H1 (cell line): ENCODE measurements at regions of chr6 and their contacts with region 1.

Region 1: DNA sequence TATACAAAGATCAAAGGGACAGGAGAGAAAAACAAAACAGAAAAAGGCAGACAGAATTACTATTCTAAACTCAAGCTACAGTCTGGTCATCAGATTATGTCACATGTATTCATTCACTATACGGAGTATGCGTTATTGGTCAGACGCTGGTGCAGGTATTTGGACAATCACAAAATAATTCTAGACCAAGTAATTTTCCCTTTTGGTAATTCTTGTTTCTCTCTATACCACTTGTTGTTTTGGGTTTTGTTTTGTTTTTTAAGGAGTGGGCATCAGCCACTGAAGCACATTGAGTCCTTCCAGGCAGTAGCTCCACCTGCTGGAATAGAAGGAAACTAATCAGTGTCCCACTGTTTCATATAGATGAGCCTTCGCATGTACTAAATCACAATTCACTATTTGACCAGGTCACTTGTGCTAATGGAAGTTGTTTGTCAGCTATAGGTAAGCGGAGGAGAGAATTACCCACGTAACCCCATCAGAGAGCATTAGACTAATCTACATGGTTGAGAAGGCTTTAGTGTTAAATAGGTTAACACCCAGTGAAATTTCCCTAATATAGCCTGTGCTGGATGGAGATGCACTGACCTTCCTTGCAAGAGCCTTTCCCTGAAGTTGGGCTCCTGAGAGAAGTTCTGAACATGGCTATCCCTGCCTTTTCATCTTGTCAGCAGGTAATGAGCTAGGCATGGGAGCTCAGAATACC is 77.9 kb downstream of the TNFAIP3 start:
- DNase-seq: no peak
- H3K4me3 ChIP-seq: no peak overlapping the region
- H3K27ac ChIP-seq: no peak overlapping the region
- H3K4me1 ChIP-seq: no peaks in the 10 kb centered on the region
- H3K27me3 ChIP-seq: no peaks in the 10 kb centered on the region
- CTCF ChIP-seq: peak in 2 of 3 experiments; percentile 65 to 76; a peak in 3 of 4 replicates
- EP300 ChIP-seq: no peak
- POLR2A ChIP-seq: no peak
- RAD21 ChIP-seq: peak; percentile 72 to 78

Region 2: GRCh38 chr6:137734875-137735182 is 210.1 kb before region 1 on chr6:
- CTCF ChIA-PET with region 1: no interaction called
- POLR2A ChIA-PET with region 1: no interaction called
- DNase-seq: no peak
- H3K4me3 ChIP-seq: no peak overlapping the region
- H3K27ac ChIP-seq: no peak overlapping the region
- H3K4me1 ChIP-seq: no peaks in the 10 kb centered on the region
- H3K27me3 ChIP-seq: no peaks in the 10 kb centered on the region
- CTCF ChIP-seq: no peak
- EP300 ChIP-seq: no peak
- POLR2A ChIP-seq: no peak
- RAD21 ChIP-seq: no peak

Region 3: DNA sequence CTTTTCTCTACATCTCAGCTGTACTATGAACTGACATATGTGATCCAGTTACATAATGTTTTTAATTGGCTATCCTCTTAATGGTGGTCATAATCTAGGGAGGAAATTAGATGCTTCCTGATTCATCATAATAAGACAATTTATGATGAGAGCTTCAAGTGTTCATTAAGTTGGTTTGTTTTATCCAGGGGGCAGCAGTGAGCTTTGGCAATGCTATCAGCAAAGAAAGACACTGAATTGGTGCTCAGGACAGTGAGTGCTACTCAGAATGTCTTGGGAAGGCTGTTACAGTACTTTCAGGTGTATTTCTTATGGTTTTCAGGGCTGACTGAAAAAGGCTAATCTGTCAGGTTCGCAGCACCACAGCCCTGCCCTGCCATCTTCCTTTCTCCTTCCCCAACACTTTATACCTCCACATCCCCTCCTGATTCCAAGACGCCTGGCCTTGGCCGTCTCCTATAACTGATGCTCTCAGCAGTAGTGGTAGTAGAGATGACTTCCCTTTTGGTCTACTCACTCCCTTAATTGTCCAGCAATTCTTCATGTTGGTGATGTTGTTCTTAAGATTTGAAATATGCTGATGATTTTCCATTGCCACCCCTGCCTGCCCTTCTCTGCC is 144.9 kb before region 1 on chr6:
- CTCF ChIA-PET with region 1: interaction called, 36 read pairs
- POLR2A ChIA-PET with region 1: no interaction called
- DNase-seq: no peak
- H3K4me3 ChIP-seq: no peak overlapping the region
- H3K27ac ChIP-seq: no peak overlapping the region
- H3K4me1 ChIP-seq: no peaks in the 10 kb centered on the region; a peak in 1 of 7 replicates
- H3K27me3 ChIP-seq: no peaks in the 10 kb centered on the region
- CTCF ChIP-seq: peak in 2 of 3 experiments; percentile 60 to 65; a peak in 3 of 4 replicates
- EP300 ChIP-seq: no peak
- POLR2A ChIP-seq: no peak
- RAD21 ChIP-seq: peak; percentile 66 to 73

Region 4: DNA sequence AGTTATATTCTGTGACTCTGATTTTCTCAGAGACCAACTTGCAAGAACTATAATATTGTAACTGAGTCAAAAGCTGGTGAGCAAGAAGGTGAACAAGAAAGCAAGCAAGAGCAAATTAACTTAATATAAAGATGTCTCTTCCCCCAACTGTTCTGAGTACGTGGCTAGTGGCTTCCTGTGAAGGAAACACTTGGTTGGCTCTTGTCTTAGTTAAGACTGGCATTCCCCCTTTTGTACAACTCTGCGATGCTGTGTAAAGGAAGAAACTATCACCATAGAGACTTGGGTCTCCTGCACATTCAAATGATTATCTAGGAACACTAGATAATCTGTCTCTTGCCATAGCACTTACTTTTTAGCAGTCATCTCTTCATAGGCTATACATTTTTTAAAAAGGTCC is 125.2 kb before region 1 on chr6:
- CTCF ChIA-PET with region 1: no interaction called
- POLR2A ChIA-PET with region 1: no interaction called
- DNase-seq: no peak
- H3K4me3 ChIP-seq: no peak overlapping the region
- H3K27ac ChIP-seq: no peak overlapping the region
- H3K4me1 ChIP-seq: no peaks in the 10 kb centered on the region
- H3K27me3 ChIP-seq: no peaks in the 10 kb centered on the region
- CTCF ChIP-seq: no peak
- EP300 ChIP-seq: no peak
- POLR2A ChIP-seq: no peak
- RAD21 ChIP-seq: no peak

Region 5: DNA sequence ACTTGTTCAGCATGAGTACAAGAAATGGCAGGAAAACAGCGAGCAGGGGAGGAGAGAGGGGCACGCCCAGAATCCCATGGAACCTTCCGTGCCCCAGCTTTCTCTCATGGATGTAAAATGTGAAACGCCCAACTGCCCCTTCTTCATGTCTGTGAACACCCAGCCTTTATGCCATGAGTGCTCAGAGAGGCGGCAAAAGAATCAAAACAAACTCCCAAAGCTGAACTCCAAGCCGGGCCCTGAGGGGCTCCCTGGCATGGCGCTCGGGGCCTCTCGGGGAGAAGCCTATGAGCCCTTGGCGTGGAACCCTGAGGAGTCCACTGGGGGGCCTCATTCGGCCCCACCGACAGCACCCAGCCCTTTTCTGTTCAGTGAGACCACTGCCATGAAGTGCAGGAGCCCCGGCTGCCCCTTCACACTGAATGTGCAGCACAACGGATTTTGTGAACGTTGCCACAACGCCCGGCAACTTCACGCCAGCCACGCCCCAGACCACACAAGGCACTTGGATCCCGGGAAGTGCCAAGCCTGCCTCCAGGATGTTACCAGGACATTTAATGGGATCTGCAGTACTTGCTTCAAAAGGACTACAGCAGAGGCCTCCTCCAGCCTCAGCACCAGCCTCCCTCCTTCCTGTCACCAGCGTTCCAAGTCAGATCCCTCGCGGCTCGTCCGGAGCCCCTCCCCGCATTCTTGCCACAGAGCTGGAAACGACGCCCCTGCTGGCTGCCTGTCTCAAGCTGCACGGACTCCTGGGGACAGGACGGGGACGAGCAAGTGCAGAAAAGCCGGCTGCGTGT is 66.3 kb before region 1 on chr6:
- CTCF ChIA-PET with region 1: interaction called, 14 read pairs
- POLR2A ChIA-PET with region 1: no interaction called
- DNase-seq: peak; percentile 25 to 84
- H3K4me3 ChIP-seq: no peak overlapping the region
- H3K27ac ChIP-seq: no peak overlapping the region
- H3K4me1 ChIP-seq: peaks cover 0 to 11% (median 5%) of the 10 kb centered on the region in 4 experiments; a peak in 4 of 7 replicates
- H3K27me3 ChIP-seq: no peaks in the 10 kb centered on the region
- CTCF ChIP-seq: peak; percentile 65 to 78 (median 69)
- EP300 ChIP-seq: no peak
- POLR2A ChIP-seq: no peak
- RAD21 ChIP-seq: peak; percentile 33 to 49; a peak in 3 of 4 replicates

Region 6: DNA sequence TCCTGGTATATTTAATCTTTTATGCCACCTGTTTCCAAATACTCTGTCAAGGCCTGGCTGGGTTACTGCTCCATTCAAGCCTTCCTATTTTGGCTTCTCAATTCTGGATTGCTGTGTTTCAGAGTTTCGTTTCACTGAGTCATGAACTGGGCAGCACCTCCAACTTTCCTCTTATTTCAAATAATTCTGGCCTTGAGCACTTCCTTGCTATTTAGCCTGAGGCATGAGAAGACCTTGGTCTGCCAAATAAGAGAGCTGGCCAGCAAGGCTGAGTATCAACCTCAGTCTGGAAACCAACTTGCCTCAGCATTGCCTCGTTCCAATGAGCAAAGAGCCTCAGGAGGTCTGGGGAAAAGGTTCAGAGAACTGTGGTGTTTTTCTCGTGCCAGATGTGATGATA is 11.2 kb before region 1 on chr6:
- CTCF ChIA-PET with region 1: interaction called, 26 read pairs
- POLR2A ChIA-PET with region 1: no interaction called
- DNase-seq: no peak
- H3K4me3 ChIP-seq: no peak overlapping the region
- H3K27ac ChIP-seq: no peak overlapping the region
- H3K4me1 ChIP-seq: no peaks in the 10 kb centered on the region
- H3K27me3 ChIP-seq: no peaks in the 10 kb centered on the region
- CTCF ChIP-seq: no peak
- EP300 ChIP-seq: no peak
- POLR2A ChIP-seq: no peak
- RAD21 ChIP-seq: no peak

Region 7: GRCh38 chr6:137975188-137975940 is 30.4 kb after region 1 on chr6:
- CTCF ChIA-PET with region 1: interaction called, 10 read pairs
- POLR2A ChIA-PET with region 1: no interaction called
- DNase-seq: no peak
- H3K4me3 ChIP-seq: no peak overlapping the region
- H3K27ac ChIP-seq: no peak overlapping the region
- H3K4me1 ChIP-seq: no peaks in the 10 kb centered on the region
- H3K27me3 ChIP-seq: no peaks in the 10 kb centered on the region
- CTCF ChIP-seq: no peak; a peak in 1 of 4 replicates
- EP300 ChIP-seq: no peak
- POLR2A ChIP-seq: no peak
- RAD21 ChIP-seq: peak; percentile 33 to 49